Sciatic nerve (tissue), 2 donors: ENCODE measurements at regions of chr2 and their contacts with region 1.

Region 1: DNA sequence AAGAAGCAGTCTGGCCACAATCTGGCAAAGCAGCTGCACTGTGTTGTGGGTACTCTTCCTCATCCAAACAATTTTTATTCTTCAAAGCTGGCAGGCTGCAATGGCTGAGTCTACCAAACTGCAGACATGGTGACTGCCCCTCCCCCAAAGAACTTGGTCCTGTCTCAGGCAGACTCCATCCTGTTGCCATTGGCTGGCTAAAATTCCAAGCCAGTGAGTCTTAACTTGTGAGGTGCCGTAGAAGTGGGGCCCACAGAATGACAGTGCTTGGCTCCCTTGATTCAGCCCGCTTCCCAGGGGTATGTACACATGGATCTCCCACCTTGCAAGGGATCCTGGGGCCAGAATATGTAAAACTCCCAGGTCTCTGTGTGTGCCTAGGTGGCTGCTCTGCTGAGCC is 14.5 kb upstream of the NXPH2 start:
- DNase-seq: no peak
- ATAC-seq: no peak

Region 2: DNA sequence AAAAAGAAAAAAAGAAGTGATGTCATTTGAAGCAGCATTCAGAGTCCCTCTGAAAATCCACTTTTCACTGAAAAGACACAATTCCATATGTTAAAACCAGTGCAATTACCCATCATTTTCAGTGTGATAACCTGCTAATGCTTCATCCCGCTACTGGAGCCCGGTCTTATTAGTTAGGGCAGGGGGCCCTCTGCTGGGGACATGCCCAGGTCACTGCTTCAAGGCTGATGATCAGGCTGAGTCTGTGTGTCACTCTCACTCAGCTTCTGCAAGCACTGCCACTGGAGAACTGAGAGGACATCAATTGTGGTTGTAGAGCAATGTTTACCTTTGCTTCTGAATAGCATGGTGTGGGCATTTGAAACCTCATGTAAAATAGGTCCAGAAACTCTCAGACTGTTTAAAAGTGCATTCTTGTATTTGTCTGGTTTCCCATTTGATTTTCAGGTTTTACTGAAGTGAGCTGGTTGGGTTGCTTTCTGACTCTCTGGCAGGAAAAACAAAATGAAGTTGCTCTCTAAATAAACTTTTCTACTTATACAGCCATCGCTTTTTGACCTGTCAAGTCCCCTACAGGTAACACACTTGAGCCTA is 34.7 kb after region 1 on chr2:
- intact Hi-C with region 1: no loop called
- DNase-seq: no peak
- ATAC-seq: no peak

Region 3: GRCh38 chr2:139652385-139652784 is 857.7 kb after region 1 on chr2:
- intact Hi-C with region 1: loop called (anchors 5 kb)
- DNase-seq: no peak
- ATAC-seq: no peak